A673 (cell line): ENCODE measurements at regions of chr6 and their contacts with region 1.

Region 1: DNA sequence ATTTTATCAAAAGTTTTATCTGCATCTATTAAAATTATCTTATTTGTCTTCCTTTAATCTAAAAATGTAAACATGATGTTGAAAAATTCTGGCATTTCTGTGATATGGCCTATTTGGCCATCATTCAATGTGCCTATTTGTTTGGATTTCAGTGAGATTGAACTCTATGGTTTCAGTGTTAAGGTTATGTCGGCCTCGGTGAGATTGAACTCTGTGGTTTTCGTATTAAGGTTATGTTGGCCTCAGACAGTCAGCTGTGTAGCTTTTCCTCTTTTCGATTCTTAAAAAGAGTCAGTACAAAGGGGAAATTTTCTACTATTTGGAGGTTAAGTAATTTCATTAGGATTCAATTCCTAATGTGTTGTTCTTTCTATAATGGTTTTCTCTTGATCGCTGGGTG is 320.6 kb downstream of the PACRG start:
- DNase-seq: no peak
- H3K4me3 ChIP-seq: no peak overlapping the region
- H3K27ac ChIP-seq: no peak overlapping the region
- H3K4me1 ChIP-seq: no peaks in the 10 kb centered on the region
- H3K27me3 ChIP-seq: no peaks in the 10 kb centered on the region
- CTCF ChIP-seq: no peak

Region 2: DNA sequence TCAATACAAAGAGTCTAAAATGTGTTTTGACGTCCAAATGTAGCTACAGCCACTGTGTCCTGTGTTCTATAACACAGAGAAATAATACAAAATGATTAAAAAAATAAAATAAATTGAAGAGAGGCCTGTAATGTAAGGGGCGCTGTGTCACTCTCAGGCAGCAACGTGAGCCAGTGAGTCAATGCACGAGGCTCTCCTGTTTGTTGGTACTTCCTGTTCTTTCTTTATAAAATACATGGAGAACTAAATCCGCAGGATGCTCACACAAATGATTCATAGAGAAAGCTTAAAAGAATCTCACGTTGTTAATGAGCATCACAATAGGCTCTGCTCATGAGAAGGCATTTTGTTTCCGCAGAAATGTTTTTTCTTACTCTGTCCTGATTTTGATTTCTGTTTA is 1139.5 kb before region 1 on chr6:
- CTCF ChIA-PET with region 1: no interaction called
- POLR2A ChIA-PET with region 1: no interaction called
- intact Hi-C with region 1: no loop called
- DNase-seq: no peak
- H3K4me3 ChIP-seq: no peak overlapping the region
- H3K27ac ChIP-seq: no peak overlapping the region
- H3K4me1 ChIP-seq: no peaks in the 10 kb centered on the region
- H3K27me3 ChIP-seq: no peaks in the 10 kb centered on the region
- CTCF ChIP-seq: no peak

Region 3: GRCh38 chr6:162596676-162597075 is 451.7 kb before region 1 on chr6:
- CTCF ChIA-PET with region 1: no interaction called
- POLR2A ChIA-PET with region 1: no interaction called
- intact Hi-C with region 1: loop called (anchors 10 kb)
- DNase-seq: no peak
- H3K4me3 ChIP-seq: no peak overlapping the region
- H3K27ac ChIP-seq: no peak overlapping the region
- H3K4me1 ChIP-seq: no peaks in the 10 kb centered on the region
- H3K27me3 ChIP-seq: no peaks in the 10 kb centered on the region
- CTCF ChIP-seq: no peak

Region 4: GRCh38 chr6:163180874-163181541 is 132.7 kb after region 1 on chr6:
- CTCF ChIA-PET with region 1: no interaction called
- POLR2A ChIA-PET with region 1: no interaction called
- intact Hi-C with region 1: no loop called
- DNase-seq: no peak
- H3K4me3 ChIP-seq: no peak overlapping the region
- H3K27ac ChIP-seq: no peak overlapping the region
- H3K4me1 ChIP-seq: no peaks in the 10 kb centered on the region
- H3K27me3 ChIP-seq: no peaks in the 10 kb centered on the region
- CTCF ChIP-seq: no peak

Region 5: GRCh38 chr6:163900570-163900969 is 852.2 kb after region 1 on chr6:
- CTCF ChIA-PET with region 1: no interaction called
- POLR2A ChIA-PET with region 1: no interaction called
- intact Hi-C with region 1: no loop called
- DNase-seq: no peak
- H3K4me3 ChIP-seq: no peak overlapping the region
- H3K27ac ChIP-seq: no peak overlapping the region
- H3K4me1 ChIP-seq: no peaks in the 10 kb centered on the region
- H3K27me3 ChIP-seq: no peaks in the 10 kb centered on the region
- CTCF ChIP-seq: no peak